ENCODE measurements at regions of chr7 and their contacts with region 1.

Region 1: GRCh38 chr7:47818796-47819606 is 129.3 kb downstream of the PKD1L1 start:
- DNase-seq: peak; percentile 70
- H3K27ac ChIP-seq: no peak overlapping the region
- CTCF ChIP-seq: peak; percentile 98

Region 2: DNA sequence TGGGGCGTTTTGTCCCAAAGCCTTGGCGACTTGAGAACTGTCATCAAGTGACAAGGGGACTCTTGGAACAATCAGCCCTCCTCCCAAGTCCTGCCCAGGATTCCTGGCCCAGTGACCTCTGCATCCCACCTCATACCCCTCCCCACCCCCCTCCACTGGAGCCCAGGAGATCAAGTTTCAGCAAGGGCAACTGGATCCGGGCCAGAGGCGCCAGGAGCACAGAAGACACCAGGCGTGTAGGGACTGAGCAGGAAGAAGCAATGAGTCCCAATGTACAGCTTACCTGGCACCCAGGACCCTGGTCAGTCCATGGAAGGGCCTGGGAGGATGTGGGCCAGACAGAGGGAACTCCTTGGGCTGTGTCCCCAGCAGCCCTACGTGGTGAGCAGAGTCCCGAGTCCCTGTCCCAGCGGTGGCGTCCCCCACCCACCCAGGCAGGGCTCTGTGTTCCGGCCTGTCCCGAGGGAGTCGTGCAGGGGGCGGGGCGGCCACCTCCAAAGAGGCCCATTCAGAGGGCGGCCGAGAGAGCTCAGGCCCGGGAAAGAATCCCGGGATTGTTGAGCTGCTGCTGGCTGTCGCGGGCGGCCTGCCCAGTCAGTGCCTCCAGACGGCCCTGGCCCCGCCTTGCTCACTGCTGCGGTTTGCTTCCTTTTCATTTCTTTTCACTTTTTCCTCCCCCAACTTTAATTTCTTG is 491.2 kb before region 1 on chr7:
- CTCF ChIA-PET with region 1: interaction called, 10 read pairs
- POLR2A ChIA-PET with region 1: no interaction called
- DNase-seq: peak; percentile 72
- H3K27ac ChIP-seq: peak overlapping the region; percentile 95
- CTCF ChIP-seq: no peak

Measured in RWPE1 (cell line).